Activated T-helper 1 cell treated with anti-CD3 and anti-CD28 coated beads, Interleukin-12 subunit alpha, Interleukin-12 subunit beta, Interleukin-2, Interleukin-4 antibody, amounts not matched to agents 30 ng/mL and 10 ng/mL and 1 ng/mL, durations not matched to agents 14 hours and 24 hours and 36 hours (primary cell): ENCODE measurements at regions of chr1 and their contacts with region 1.

Region 1: GRCh38 chr1:27632387-27633297 is 2.3 kb downstream of the FGR start:
- DNase-seq: peak; percentile 59
- H3K4me3 Mint-ChIP-seq: peak overlapping the region; percentile 74
- H3K27ac Mint-ChIP-seq: peak overlapping the region; percentile 93
- H3K4me1 Mint-ChIP-seq: peaks cover 76% of the 10 kb centered on the region
- H3K27me3 Mint-ChIP-seq: no peaks in the 10 kb centered on the region

Region 2: GRCh38 chr1:27568300-27569087 is 64.1 kb before region 1 on chr1:
- intact Hi-C with region 1: loop called (anchors 2 kb)
- DNase-seq: peak; percentile 94
- H3K4me3 Mint-ChIP-seq: peak overlapping the region; percentile 67
- H3K27ac Mint-ChIP-seq: no peak overlapping the region
- H3K4me1 Mint-ChIP-seq: peaks cover 18% of the 10 kb centered on the region
- H3K27me3 Mint-ChIP-seq: no peaks in the 10 kb centered on the region

Region 3: DNA sequence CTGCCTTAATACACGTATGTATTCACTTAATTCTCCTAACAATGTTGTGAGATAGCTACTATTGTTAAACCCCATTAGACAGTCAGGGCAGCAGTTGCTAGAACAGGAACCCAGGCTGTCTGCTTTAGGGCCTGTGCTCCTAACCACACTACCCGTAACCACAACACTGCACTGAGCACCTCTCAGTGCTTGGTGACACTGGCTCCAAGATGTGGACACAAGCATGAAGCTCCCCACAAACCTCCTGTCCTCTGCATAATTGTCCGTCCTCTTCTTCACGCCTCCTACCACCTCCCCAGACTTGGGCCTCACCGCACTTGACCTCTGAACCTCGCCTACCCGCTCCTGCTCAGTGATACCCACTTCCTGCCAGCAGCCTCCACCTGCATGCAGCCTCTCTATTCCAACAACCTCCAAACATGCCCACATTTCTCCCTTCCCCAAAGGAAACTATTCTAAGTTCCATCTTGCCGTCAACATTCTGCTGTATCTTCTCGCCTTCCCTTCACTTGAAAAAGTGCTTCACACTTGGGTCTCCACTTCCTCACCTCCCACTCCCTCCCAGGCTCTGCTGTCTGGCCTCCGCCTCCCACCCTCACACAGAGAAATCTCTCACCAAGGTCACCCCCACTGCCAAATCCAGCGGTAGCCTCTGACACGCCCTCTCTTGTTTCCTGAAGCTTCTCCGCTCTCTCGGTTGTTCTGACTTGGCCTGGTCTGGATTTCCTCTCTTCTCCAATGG is 14.1 kb before region 1 on chr1:
- intact Hi-C with region 1: loop called (anchors 1 kb)
- DNase-seq: peak; percentile 44
- H3K4me3 Mint-ChIP-seq: peak overlapping the region; percentile 65
- H3K27ac Mint-ChIP-seq: peak overlapping the region; percentile 87
- H3K4me1 Mint-ChIP-seq: peaks cover 58% of the 10 kb centered on the region
- H3K27me3 Mint-ChIP-seq: peaks cover 5% of the 10 kb centered on the region